PC-9 (cell line): ENCODE measurements at regions of chr7 and their contacts with region 1.

Region 1: GRCh38 chr7:55018361-55019190 is at the start of gene EGFR:
- DNase-seq: peak; percentile 80 to 96
- H3K4me3 ChIP-seq: peak within 1 kb of the TSS; percentile 79
- H3K27ac ChIP-seq: peak within 1 kb of the TSS; percentile 68
- H3K4me1 ChIP-seq: peaks cover 37% of the 10 kb centered on the region
- H3K27me3 ChIP-seq: no peaks in the 10 kb centered on the region
- CTCF ChIP-seq: no peak
- total RNA-seq, gene EGFR: 324 and 342 TPM in 2 replicates

Region 2: DNA sequence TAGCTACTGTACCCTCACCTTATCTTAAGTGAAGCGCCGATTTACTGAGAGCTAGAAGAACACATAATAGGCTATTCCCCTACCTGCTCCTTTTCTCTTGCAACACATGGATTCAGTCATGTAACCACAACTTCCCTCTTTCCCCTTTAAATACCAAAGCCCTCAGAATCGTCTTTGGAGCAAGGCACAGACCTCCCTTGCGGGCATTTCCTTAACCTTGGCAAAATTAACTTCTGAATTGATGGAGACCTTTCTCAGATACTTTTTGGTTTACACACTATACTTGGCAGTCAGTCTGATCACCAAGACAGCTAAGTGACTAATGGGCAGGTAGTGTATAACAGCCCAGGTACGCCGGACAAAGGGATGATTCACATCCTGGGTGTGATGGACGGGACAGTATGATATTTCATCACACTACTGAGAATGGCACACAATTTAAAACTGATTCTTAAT is 186.9 kb before region 1 on chr7:
- CTCF ChIA-PET with region 1: no interaction called
- POLR2A ChIA-PET with region 1: interaction called, 11 read pairs
- intact Hi-C with region 1: loop called (anchors 2 kb)
- DNase-seq: peak; percentile 86 to 100
- H3K4me3 ChIP-seq: peak overlapping the region; percentile 39; the same call in 1 of the 2 replicates
- H3K27ac ChIP-seq: peak overlapping the region; percentile 94
- H3K4me1 ChIP-seq: peaks cover 45% of the 10 kb centered on the region
- H3K27me3 ChIP-seq: no peaks in the 10 kb centered on the region
- CTCF ChIP-seq: no peak; the same call in none of the 2 replicates

Region 3: GRCh38 chr7:54932818-54933543 is 85.6 kb before region 1 on chr7:
- CTCF ChIA-PET with region 1: interaction called, 6 read pairs
- POLR2A ChIA-PET with region 1: no interaction called
- intact Hi-C with region 1: loop called (anchors 1 kb)
- DNase-seq: peak; percentile 74 to 91
- H3K4me3 ChIP-seq: peak overlapping the region; percentile 60
- H3K27ac ChIP-seq: no peak overlapping the region
- H3K4me1 ChIP-seq: peaks cover 14% of the 10 kb centered on the region
- H3K27me3 ChIP-seq: no peaks in the 10 kb centered on the region
- CTCF ChIP-seq: no peak

Region 4: GRCh38 chr7:54995631-54996340 is 22.8 kb before region 1 on chr7:
- CTCF ChIA-PET with region 1: interaction called, 6 read pairs
- POLR2A ChIA-PET with region 1: interaction called, 5 read pairs
- intact Hi-C with region 1: loop called (anchors 1 kb)
- DNase-seq: peak; percentile 71 to 99
- H3K4me3 ChIP-seq: peak overlapping the region; percentile 13
- H3K27ac ChIP-seq: peak overlapping the region; percentile 89
- H3K4me1 ChIP-seq: peaks cover 56% of the 10 kb centered on the region
- H3K27me3 ChIP-seq: no peaks in the 10 kb centered on the region
- CTCF ChIP-seq: peak; percentile 9; the same call in 1 of the 2 replicates

Region 5: DNA sequence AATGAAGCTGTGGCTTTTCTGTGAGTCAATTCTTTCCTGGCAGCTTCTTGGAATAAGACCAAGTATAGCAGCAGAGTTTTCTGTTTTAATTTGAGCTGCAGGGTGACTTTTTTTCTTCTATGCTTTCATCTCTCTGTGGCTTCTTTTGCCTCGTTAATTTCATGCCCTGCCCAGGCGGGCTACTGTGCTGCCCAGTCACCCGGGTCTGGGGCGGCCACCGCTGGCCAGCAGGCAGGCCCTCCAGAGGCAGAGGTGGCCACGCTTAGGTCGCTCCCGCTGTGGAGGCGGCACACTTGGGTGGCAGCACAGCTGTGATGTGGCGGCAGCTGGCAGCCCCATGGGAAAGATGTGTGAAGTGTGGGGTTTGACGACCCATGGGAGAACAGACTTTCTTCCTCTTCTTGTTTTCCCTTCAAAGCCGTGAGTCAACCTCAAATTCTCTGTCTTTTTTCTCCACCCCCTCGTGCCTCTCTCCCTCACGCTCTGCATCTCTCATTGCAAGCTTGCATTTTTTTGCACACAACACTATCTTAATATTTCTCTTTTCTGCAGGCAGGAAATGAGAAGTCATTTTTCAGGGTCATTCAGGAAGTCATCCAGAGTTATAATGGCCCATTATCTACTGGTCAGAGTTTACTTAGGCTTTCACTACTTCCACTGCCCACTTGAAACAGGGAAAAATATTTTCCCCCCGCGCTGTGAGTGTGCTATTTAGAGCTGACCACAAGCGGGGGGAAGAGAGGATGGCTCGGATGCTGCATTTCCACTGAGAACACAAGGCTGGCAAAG is 68.0 kb after region 1 on chr7:
- CTCF ChIA-PET with region 1: no interaction called
- POLR2A ChIA-PET with region 1: interaction called, 6 read pairs
- intact Hi-C with region 1: loop called (anchors 2 kb)
- DNase-seq: peak; percentile 65 to 87
- H3K4me3 ChIP-seq: no peak overlapping the region
- H3K27ac ChIP-seq: peak overlapping the region; percentile 25
- H3K4me1 ChIP-seq: peaks cover 19% of the 10 kb centered on the region
- H3K27me3 ChIP-seq: no peaks in the 10 kb centered on the region
- CTCF ChIP-seq: no peak

Region 6: GRCh38 chr7:55964261-55965099 is 945.9 kb after region 1 on chr7 and contains the start of gene NIPSNAP2:
- CTCF ChIA-PET with region 1: interaction called, 10 read pairs
- POLR2A ChIA-PET with region 1: no interaction called
- intact Hi-C with region 1: no loop called
- DNase-seq: peak; percentile 63 to 89
- H3K4me3 ChIP-seq: peak within 1 kb of the TSS; percentile 67
- H3K27ac ChIP-seq: peak within 1 kb of the TSS; percentile 54
- H3K4me1 ChIP-seq: peaks cover 19% of the 10 kb centered on the region
- H3K27me3 ChIP-seq: no peaks in the 10 kb centered on the region
- CTCF ChIP-seq: peak; percentile 64
- total RNA-seq, gene NIPSNAP2: 96.1 and 97.5 TPM in 2 replicates